ENCODE measurements at regions of chr15 and their contacts with region 1.

Region 1: GRCh38 chr15:38035701-38036100 is 101.3 kb downstream of the TMCO5A start:
- DNase-seq: no peak
- ATAC-seq: no peak
- H3K4me3 ChIP-seq: no peak overlapping the region
- H3K27ac ChIP-seq: no peak overlapping the region
- H3K4me1 ChIP-seq: no peaks in the 10 kb centered on the region
- H3K27me3 ChIP-seq: no peaks in the 10 kb centered on the region; a peak in 1 of 4 replicates
- CTCF ChIP-seq: no peak
- EP300 ChIP-seq: no peak
- POLR2A ChIP-seq: no peak
- RAD21 ChIP-seq: no peak

Region 2: GRCh38 chr15:37550360-37551024 is 485.2 kb before region 1 on chr15:
- CTCF ChIA-PET with region 1: no interaction called
- POLR2A ChIA-PET with region 1: no interaction called
- RAD21 ChIA-PET with region 1: no interaction called
- SMC1A ChIA-PET with region 1: no interaction called
- in situ Hi-C with region 1: no loop called
- intact Hi-C with region 1: no loop called
- DNase-seq: no peak
- ATAC-seq: no peak
- H3K4me3 ChIP-seq: no peak overlapping the region
- H3K27ac ChIP-seq: no peak overlapping the region
- H3K4me1 ChIP-seq: no peaks in the 10 kb centered on the region
- H3K27me3 ChIP-seq: no peaks in the 10 kb centered on the region
- CTCF ChIP-seq: no peak
- EP300 ChIP-seq: no peak
- POLR2A ChIP-seq: no peak
- RAD21 ChIP-seq: no peak

Region 3: DNA sequence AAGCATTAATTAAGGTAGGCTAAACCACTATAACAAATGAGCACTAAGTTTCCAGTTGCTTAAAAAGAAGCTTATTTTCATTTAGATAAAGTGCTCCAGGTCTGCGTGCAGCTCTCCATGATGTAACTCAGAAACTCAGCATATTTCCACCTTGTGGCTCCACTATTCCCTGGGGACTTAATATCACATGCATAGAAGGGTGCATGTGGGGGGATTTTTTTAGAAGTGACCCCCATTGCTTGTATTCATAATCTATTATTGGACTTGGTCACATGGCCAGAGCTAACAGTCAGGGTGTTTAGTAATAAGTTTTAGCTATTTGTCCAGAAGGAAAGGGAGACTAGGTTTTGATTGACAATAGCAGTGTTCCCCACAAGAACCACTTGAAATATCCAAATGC is 14.4 kb before region 1 on chr15:
- CTCF ChIA-PET with region 1: interaction called, 4 read pairs
- POLR2A ChIA-PET with region 1: interaction called, 3 read pairs
- RAD21 ChIA-PET with region 1: interaction called, 5 read pairs
- SMC1A ChIA-PET with region 1: interaction called, 24 read pairs
- in situ Hi-C with region 1: no loop called
- intact Hi-C with region 1: no loop called
- DNase-seq: no peak
- ATAC-seq: peak; percentile 73
- H3K4me3 ChIP-seq: no peak overlapping the region
- H3K27ac ChIP-seq: no peak overlapping the region
- H3K4me1 ChIP-seq: no peaks in the 10 kb centered on the region
- H3K27me3 ChIP-seq: no peaks in the 10 kb centered on the region
- CTCF ChIP-seq: no peak
- EP300 ChIP-seq: peak; percentile 51 to 64; a peak in 3 of 4 replicates
- POLR2A ChIP-seq: no peak
- RAD21 ChIP-seq: no peak